ENCODE measurements at regions of chr5 and their contacts with region 1.

Region 1: DNA sequence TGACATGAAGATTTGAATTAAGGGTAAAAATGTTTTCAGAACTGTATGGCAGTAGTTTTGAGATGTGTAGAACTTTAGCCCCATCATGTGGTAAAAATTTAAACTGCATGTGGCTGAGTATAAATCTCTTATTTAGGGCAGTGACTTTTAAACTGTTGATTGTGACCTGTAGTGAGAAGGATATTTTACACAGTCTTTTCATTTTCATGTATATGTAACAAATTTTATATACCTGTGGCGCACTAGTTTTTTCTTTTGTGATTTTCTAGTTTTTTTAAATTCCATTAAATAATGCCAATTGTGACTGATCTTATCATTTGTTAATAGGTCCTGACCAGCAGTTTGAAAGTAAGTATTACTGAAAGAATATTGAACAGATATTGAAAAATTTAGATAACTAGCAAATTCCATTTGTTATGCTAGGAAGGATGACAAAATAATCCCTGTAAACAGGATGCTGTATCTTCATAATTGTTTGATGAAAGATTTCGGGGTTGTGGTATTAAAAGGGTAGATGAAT is 47.2 kb downstream of the GPBP1 start:
- DNase-seq: no peak
- H3K4me3 ChIP-seq: no peak overlapping the region
- H3K27ac ChIP-seq: no peak overlapping the region
- H3K4me1 ChIP-seq: no peaks in the 10 kb centered on the region
- H3K27me3 ChIP-seq: no peaks in the 10 kb centered on the region
- CTCF ChIP-seq: peak; percentile 68 to 88 (median 76)
- POLR2A ChIP-seq: no peak

Region 2: GRCh38 chr5:56893251-56893951 is 327.7 kb before region 1 on chr5:
- intact Hi-C with region 1: no loop called
- DNase-seq: no peak
- H3K4me3 ChIP-seq: no peak overlapping the region
- H3K27ac ChIP-seq: no peak overlapping the region
- H3K4me1 ChIP-seq: no peaks in the 10 kb centered on the region
- H3K27me3 ChIP-seq: no peaks in the 10 kb centered on the region
- CTCF ChIP-seq: no peak
- POLR2A ChIP-seq: no peak

Region 3: GRCh38 chr5:56909294-56910209 is 311.6 kb before region 1 on chr5 and contains the start of gene SETD9:
- intact Hi-C with region 1: loop called (anchors 10 kb)
- DNase-seq: peak; percentile 99
- H3K4me3 ChIP-seq: peak within 1 kb of the TSS; percentile 73 to 74
- H3K27ac ChIP-seq: peak within 1 kb of the TSS; percentile 94 to 96
- H3K4me1 ChIP-seq: peaks cover 6% of the 10 kb centered on the region
- H3K27me3 ChIP-seq: no peaks in the 10 kb centered on the region
- CTCF ChIP-seq: no peak
- POLR2A ChIP-seq: no peak
- total RNA-seq, gene SETD9: 27.3 to 43.5 TPM

Measured in testis (tissue), 5 donors.